ENCODE measurements at regions of chr1 and their contacts with region 1.

Region 1: DNA sequence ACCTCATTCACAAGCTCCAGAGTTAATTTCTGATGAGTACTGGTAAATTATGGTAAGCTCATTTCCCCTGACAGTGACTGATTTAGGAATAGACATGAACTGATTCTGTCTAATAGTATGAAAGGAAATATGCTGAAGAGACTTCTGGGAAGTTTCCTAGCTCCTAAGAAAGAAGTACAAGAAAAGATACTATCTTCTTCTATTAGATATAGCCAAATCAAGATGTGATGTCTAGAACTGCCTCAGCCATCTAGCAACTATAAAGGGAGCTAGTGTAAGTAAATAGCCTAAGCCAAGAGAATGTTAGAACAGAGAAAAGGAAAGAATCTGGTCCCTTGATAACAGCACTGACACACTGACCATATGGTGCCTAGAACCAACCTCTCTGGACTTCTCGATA is 10.7 kb upstream of the PHTF1 start:
- DNase-seq: no peak

Region 2: GRCh38 chr1:113804421-113805255 is 34.6 kb after region 1 on chr1:
- intact Hi-C with region 1: loop called in 1 of 2 experiments (anchors 5 kb)
- DNase-seq: no peak

Region 3: DNA sequence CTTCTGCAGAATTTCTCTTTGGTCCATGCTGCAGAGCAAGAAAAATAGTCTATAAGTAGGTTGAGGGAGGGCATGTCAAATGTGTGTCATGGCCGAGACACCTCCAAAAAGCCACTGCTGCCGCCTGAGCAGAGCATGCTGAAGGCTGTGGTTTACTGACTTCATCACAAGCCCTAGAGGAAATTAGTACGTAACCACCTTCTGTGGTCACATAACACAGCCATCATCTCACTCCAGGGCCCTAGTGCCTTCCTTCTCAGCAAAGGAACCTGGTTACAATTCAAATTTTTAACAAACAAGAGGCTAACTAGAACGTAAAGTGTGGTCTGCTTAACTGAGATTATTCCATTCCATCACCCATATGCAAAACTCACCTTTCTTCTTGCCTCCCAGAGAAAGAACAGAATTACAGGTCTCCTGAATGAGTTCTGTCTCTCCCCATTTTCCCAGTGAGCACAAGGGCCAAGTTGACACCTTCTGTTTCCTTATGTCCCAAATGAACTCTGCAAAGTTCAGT is 101.6 kb after region 1 on chr1 and contains the start of gene PTPN22:
- intact Hi-C with region 1: no loop called
- DNase-seq: peak; percentile 84
- total RNA-seq, gene PTPN22: 3.9 to 4.6 TPM

Measured in posterior vena cava (tissue), 2 donors.